Esophagus muscularis mucosa (tissue), 4 donors: ENCODE measurements at regions of chr7 and their contacts with region 1.

Region 1: GRCh38 chr7:40329601-40330153 is 194.9 kb downstream of the SUGCT start:
- DNase-seq: no peak
- H3K4me3 ChIP-seq: no peak overlapping the region
- H3K27ac ChIP-seq: peak overlapping the region in 2 of 4 donors; percentile 13 to 48
- H3K4me1 ChIP-seq: peaks cover 0 to 19% (median 18%) of the 10 kb centered on the region in 4 donors
- H3K27me3 ChIP-seq: no peaks in the 10 kb centered on the region
- CTCF ChIP-seq: peak; percentile 70 to 77 (median 73)
- EP300 ChIP-seq: no peak
- POLR2A ChIP-seq: no peak

Region 2: DNA sequence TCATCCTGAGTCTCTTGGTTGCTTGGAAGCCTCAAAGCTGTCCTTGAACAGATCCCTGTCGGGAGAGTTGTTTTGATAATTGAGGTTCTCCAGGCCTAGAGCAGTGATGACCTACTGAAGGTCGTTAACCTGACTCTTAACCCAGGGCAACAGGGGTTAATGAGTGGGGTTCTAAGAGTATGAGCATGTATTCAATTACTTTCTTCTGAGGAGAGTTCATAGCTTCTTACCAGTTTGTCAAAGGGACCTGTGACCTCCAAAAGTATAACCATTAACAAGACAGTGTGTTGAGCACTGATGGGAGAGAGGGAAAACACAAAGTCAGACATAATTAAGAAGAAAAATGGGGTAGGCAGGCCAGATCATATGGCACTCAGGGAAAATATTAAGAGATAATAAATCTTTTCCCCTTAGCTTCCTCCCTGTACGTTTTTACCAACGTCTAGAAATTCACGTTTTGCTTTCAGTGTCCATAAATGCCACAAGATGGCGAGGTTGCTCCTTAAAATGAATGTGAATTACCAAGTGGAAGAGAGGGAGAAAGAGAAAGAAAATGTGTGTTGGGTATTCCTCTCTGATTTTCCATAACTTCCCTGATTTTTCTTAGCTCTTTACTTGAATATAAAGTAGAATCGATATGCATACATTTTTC is 97.3 kb before region 1 on chr7:
- intact Hi-C with region 1: loop called (anchors 10 kb)
- DNase-seq: no peak
- H3K4me3 ChIP-seq: no peak overlapping the region
- H3K27ac ChIP-seq: peak overlapping the region; percentile 8 to 52 (median 37)
- H3K4me1 ChIP-seq: peaks cover 0 to 9% (median 6%) of the 10 kb centered on the region in 4 donors
- H3K27me3 ChIP-seq: no peaks in the 10 kb centered on the region
- CTCF ChIP-seq: peak; percentile 64 to 70 (median 64)
- EP300 ChIP-seq: no peak
- POLR2A ChIP-seq: no peak

Region 3: DNA sequence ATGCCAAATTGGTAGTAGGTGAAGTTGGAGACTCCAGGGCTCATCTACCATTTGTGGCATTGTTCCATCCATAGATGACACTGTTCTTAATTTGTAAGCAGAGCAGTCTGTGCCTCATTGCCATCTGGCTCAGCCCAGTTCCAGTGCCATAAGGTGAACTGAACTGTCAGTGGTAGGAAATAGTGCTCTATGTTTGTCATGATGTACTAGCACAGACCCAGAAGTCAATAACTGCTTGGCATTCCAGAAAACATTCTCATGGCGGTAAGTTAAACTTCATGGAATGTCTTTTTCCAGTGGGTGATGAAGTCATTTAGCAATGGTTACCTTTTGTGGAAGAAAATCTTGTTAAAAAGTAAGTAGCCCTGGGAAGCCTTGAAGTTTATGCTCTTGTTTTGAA is 107.8 kb after region 1 on chr7:
- intact Hi-C with region 1: no loop called
- DNase-seq: no peak
- H3K4me3 ChIP-seq: no peak overlapping the region
- H3K27ac ChIP-seq: peak overlapping the region in 3 of 4 donors; percentile 53 to 77 (median 70)
- H3K4me1 ChIP-seq: peaks cover 0 to 32% (median 9%) of the 10 kb centered on the region in 4 donors
- H3K27me3 ChIP-seq: no peaks in the 10 kb centered on the region
- CTCF ChIP-seq: no peak
- EP300 ChIP-seq: no peak
- POLR2A ChIP-seq: no peak

Region 4: GRCh38 chr7:40604601-40605438 is 275.1 kb after region 1 on chr7:
- intact Hi-C with region 1: loop called (anchors 5 kb)
- DNase-seq: no peak
- H3K4me3 ChIP-seq: no peak overlapping the region
- H3K27ac ChIP-seq: no peak overlapping the region
- H3K4me1 ChIP-seq: peaks cover 0 to 8% (median 0%) of the 10 kb centered on the region in 4 donors
- H3K27me3 ChIP-seq: no peaks in the 10 kb centered on the region
- CTCF ChIP-seq: peak; percentile 53 to 64 (median 59)
- EP300 ChIP-seq: no peak
- POLR2A ChIP-seq: no peak

Region 5: DNA sequence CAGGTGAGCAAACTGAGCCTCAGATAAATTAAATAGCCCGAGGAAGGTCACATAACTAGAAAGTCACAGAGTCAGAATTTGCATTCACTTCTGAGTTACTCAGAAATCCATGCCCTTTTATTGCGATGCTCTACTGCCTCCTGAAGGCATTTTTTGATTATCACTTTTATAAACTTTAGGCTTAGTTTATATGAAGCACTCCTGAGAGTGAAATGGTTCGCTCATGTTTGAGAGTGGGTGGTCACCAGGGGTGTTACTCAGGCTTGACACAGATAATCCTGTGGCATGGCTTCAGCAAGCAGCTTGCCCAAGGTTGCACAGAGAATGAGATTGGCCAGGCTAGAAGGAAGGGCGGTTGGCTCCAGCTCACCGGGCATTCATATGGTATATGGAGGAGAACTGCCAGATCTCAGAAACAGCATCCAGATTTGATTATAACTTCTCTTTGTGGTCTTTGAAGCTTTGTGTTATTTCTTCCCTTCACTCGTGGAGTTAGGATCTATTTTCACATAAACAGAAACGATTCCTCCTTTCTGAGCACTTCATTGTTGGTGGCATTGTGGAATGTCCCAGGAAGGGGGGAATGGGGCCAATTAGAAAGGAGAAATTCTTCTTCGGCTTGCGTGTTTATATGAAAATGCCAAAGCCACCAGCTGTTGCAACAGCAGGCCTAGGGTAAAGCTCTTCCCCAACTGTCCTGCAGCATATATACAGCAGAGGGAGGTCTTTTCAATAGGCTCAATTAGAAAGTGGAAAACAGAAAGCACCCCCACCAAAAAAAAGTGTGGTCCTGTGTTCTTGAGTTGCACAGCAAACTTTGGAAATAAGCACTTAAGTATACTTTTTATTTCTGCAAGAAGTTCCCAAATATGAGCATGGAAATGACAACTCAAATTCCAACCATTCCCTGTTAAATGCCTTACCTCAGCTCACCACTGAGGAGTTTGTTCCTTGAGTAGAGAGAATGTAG is 433.9 kb after region 1 on chr7:
- intact Hi-C with region 1: loop called (anchors 5 kb)
- DNase-seq: no peak
- H3K4me3 ChIP-seq: peak overlapping the region in 1 of 4 donors; percentile 27
- H3K27ac ChIP-seq: peak overlapping the region; percentile 61 to 78 (median 77)
- H3K4me1 ChIP-seq: peaks cover 7 to 59% (median 54%) of the 10 kb centered on the region in 4 donors
- H3K27me3 ChIP-seq: no peaks in the 10 kb centered on the region
- CTCF ChIP-seq: peak; percentile 19 to 53 (median 37)
- EP300 ChIP-seq: no peak
- POLR2A ChIP-seq: no peak

Region 6: DNA sequence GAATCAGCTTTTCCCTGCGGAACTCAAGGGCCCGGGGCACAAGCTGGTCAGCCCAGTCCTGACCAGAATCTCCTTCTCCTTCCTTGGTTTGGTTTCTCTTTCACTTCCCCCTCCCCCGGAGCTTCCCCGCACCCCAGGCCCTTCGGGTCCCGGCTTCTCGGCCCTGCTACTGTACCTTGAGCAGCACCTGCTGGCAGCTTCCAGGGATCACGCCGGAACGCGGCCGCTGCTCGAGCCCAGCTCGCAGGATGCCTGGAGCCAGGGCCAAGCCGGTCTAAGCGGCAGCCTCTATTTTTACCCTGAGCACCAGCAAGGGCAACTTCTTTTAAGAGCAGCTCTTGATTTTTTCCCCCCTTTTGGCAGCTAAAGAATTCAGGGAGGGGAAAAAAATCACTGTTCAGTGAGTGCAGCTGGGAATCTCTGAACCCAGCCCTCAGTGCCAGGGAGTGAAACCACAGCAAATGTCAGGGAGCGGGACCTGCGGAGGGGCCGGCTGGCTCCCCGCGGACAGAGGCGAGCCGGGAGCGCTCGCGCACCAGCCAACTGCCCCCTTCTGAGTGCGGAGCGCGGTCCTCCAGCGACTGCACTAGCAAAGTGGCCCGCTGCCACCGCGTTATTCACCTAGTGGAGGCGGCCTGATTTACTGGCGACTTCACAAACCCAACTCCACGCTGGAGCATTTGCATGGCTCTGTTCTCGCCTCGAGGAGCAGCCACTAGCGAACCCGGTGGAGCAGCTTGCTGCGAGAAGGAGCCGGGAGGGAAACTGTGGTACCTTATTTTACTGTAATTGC is 1375.6 kb after region 1 on chr7:
- intact Hi-C with region 1: loop called (anchors 5 kb)
- DNase-seq: peak; percentile 95
- H3K4me3 ChIP-seq: peak overlapping the region; percentile 56 to 66 (median 58)
- H3K27ac ChIP-seq: peak overlapping the region; percentile 83 to 94 (median 88)
- H3K4me1 ChIP-seq: peaks cover 19 to 62% (median 59%) of the 10 kb centered on the region in 4 donors
- H3K27me3 ChIP-seq: no peaks in the 10 kb centered on the region
- CTCF ChIP-seq: peak; percentile 69 to 74 (median 73)
- EP300 ChIP-seq: no peak
- POLR2A ChIP-seq: no peak